Activated CD8-positive, alpha-beta T cell treated with anti-CD3 and anti-CD28 coated beads for 36 hours (primary cell): ENCODE measurements at regions of chr5 and their contacts with region 1.

Region 1: GRCh38 chr5:139403787-139404483 is at the start of gene SPATA24:
- DNase-seq: peak; percentile 100
- ATAC-seq: peak; percentile 89
- H3K4me3 Mint-ChIP-seq: peak within 1 kb of the TSS; percentile 85
- H3K27ac Mint-ChIP-seq: peak within 1 kb of the TSS; percentile 99
- H3K4me1 Mint-ChIP-seq: peaks cover 39% of the 10 kb centered on the region
- H3K27me3 Mint-ChIP-seq: no peaks in the 10 kb centered on the region
- CTCF ChIP-seq: no peak
- total RNA-seq, gene SPATA24: 4.3 to 4.4 TPM

Region 2: GRCh38 chr5:139014726-139015125 is 389.2 kb before region 1 on chr5:
- CTCF ChIA-PET with region 1: no interaction called
- POLR2A ChIA-PET with region 1: no interaction called
- intact Hi-C with region 1: no loop called
- DNase-seq: no peak
- ATAC-seq: no peak
- H3K4me3 Mint-ChIP-seq: no peak overlapping the region
- H3K27ac Mint-ChIP-seq: no peak overlapping the region
- H3K4me1 Mint-ChIP-seq: no peaks in the 10 kb centered on the region
- H3K27me3 Mint-ChIP-seq: no peaks in the 10 kb centered on the region
- CTCF ChIP-seq: no peak

Region 3: GRCh38 chr5:139417214-139417613 is 13.3 kb after region 1 on chr5:
- CTCF ChIA-PET with region 1: interaction called, 17 read pairs
- POLR2A ChIA-PET with region 1: interaction called, 49 read pairs
- intact Hi-C with region 1: no loop called
- DNase-seq: no peak
- ATAC-seq: no peak
- H3K4me3 Mint-ChIP-seq: no peak overlapping the region
- H3K27ac Mint-ChIP-seq: peak overlapping the region; percentile 96
- H3K4me1 Mint-ChIP-seq: peaks cover 46% of the 10 kb centered on the region
- H3K27me3 Mint-ChIP-seq: no peaks in the 10 kb centered on the region
- CTCF ChIP-seq: no peak

Region 4: GRCh38 chr5:139468421-139468931 is 64.5 kb after region 1 on chr5:
- CTCF ChIA-PET with region 1: no interaction called
- POLR2A ChIA-PET with region 1: no interaction called
- intact Hi-C with region 1: no loop called
- DNase-seq: peak; percentile 47
- ATAC-seq: peak; percentile 40
- H3K4me3 Mint-ChIP-seq: no peak overlapping the region
- H3K27ac Mint-ChIP-seq: peak overlapping the region; percentile 23
- H3K4me1 Mint-ChIP-seq: peaks cover 45% of the 10 kb centered on the region
- H3K27me3 Mint-ChIP-seq: no peaks in the 10 kb centered on the region
- CTCF ChIP-seq: no peak